Heart left ventricle (tissue), 16 donors: ENCODE measurements at regions of chr13 and their contacts with region 1.

Region 1: GRCh38 chr13:99442273-99442895 is 58.9 kb upstream of the TM9SF2 start:
- DNase-seq: no peak
- ATAC-seq: peak in 2 of 4 donors; percentile 53 to 59
- H3K4me3 ChIP-seq: no peak overlapping the region
- H3K27ac ChIP-seq: no peak overlapping the region
- H3K4me1 ChIP-seq: peaks cover 0 to 7% (median 0%) of the 10 kb centered on the region in 12 donors
- H3K27me3 ChIP-seq: peaks cover 0 to 36% (median 11%) of the 10 kb centered on the region in 9 donors
- CTCF ChIP-seq: peak; percentile 93 to 99 (median 96)
- POLR2A ChIP-seq: no peak

Region 2: DNA sequence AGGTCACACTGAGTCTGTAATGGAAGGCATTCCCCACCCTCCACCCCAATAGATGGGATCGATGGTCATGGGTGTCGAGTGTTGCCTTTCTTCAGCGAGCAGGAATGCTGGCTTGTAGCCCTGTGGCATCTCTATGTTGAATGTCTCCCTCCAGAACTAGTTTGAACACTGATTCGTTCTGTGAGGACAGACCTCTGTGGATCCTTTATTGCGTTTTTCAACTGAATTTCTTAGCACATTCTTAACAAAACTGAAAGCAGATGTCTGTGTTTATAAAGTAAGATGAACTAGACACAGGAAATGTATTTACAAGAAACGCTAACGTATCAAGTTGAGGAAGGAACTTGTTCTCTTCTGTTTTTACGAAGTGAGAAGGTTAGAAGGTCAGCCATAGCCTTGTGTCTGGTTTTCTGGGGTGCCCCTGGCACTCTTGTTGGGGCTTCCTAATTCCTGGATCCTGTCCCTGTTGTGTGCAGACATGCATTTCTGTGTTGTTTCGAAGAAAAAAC is 22.1 kb after region 1 on chr13:
- intact Hi-C with region 1: no loop called
- DNase-seq: no peak
- ATAC-seq: no peak
- H3K4me3 ChIP-seq: peak overlapping the region in 1 of 12 donors; percentile 9
- H3K27ac ChIP-seq: peak overlapping the region in 1 of 12 donors; percentile 81
- H3K4me1 ChIP-seq: peaks cover 0 to 29% (median 0%) of the 10 kb centered on the region in 12 donors
- H3K27me3 ChIP-seq: no peaks in the 10 kb centered on the region
- CTCF ChIP-seq: no peak
- POLR2A ChIP-seq: no peak

Region 3: DNA sequence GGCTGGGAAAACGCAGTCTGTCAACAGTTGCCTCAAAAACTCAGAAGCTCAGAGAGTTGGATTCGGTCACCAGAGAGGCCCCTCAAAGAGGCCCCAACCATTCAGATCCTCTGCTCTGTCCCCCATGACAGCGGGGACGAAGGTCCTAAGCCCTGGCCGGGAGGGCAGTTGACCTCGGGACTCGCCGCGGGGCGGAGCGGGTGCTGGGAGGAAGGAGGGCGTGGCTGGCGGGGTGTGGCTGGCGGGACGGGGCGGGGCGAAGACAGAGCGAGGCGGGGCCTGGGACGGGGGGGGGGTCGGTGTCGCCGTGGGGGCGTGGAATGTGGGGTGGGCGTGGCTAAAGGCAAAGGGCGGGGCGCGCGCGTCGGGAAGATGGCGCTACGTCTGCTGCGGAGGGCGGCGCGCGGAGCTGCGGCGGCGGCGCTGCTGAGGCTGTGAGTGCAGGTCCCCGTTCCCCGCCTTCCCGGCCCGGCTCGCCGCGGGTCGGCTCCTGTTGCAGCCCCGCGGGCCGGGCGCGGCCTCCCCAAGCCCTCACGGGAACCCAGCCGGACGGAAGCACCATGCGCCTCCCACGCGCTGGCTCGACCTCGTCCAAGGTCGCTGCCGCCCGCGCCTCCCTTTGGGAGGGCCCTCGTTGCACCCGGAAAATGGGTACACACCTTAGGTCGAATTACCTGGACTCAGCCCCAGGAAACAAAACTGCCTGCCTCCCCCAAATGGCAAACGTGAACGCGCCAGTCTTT is 164.1 kb after region 1 on chr13:
- intact Hi-C with region 1: loop called in 7 of 10 experiments (anchors 5 to 10 kb)
- DNase-seq: peak; percentile 91 to 97 (median 93)
- ATAC-seq: peak; percentile 94 to 98 (median 98)
- H3K4me3 ChIP-seq: peak within 1 kb of the TSS; percentile 43 to 90 (median 71)
- H3K27ac ChIP-seq: peak within 1 kb of the TSS in 11 of 12 donors; percentile 76 to 91 (median 85)
- H3K4me1 ChIP-seq: peaks cover 0 to 18% (median 9%) of the 10 kb centered on the region in 12 donors
- H3K27me3 ChIP-seq: no peaks in the 10 kb centered on the region
- CTCF ChIP-seq: peak in 1 of 12 donors; percentile 11
- POLR2A ChIP-seq: peak; percentile 35 to 91

Region 4: GRCh38 chr13:99617474-99618255 is 175.3 kb after region 1 on chr13:
- intact Hi-C with region 1: loop called in 6 of 10 experiments (anchors 5 to 10 kb)
- DNase-seq: peak in 2 of 5 donors; percentile 30 to 46
- ATAC-seq: peak in 3 of 4 donors; percentile 53 to 71 (median 58)
- H3K4me3 ChIP-seq: peak overlapping the region in 1 of 12 donors; percentile 7
- H3K27ac ChIP-seq: no peak overlapping the region
- H3K4me1 ChIP-seq: peaks cover 0 to 15% (median 0%) of the 10 kb centered on the region in 12 donors
- H3K27me3 ChIP-seq: no peaks in the 10 kb centered on the region
- CTCF ChIP-seq: peak; percentile 23 to 76 (median 56)
- POLR2A ChIP-seq: no peak